Activated CD4-positive, alpha-beta memory T cell treated with anti-CD3 and anti-CD28 coated beads for 36 hours (primary cell): ENCODE measurements at regions of chr4 and their contacts with region 1.

Region 1: GRCh38 chr4:119151161-119151560 is 15.5 kb downstream of the MYOZ2 start:
- DNase-seq: no peak
- H3K4me3 Mint-ChIP-seq: no peak overlapping the region
- H3K27ac Mint-ChIP-seq: no peak overlapping the region
- H3K4me1 Mint-ChIP-seq: no peaks in the 10 kb centered on the region
- H3K27me3 Mint-ChIP-seq: peaks cover 1% of the 10 kb centered on the region

Region 2: GRCh38 chr4:119165767-119166166 is 14.6 kb after region 1 on chr4:
- CTCF ChIA-PET with region 1: interaction called, 4 read pairs
- POLR2A ChIA-PET with region 1: no interaction called
- intact Hi-C with region 1: loop called (anchors 1 kb)
- DNase-seq: no peak
- H3K4me3 Mint-ChIP-seq: no peak overlapping the region
- H3K27ac Mint-ChIP-seq: no peak overlapping the region
- H3K4me1 Mint-ChIP-seq: no peaks in the 10 kb centered on the region
- H3K27me3 Mint-ChIP-seq: peaks cover 4% of the 10 kb centered on the region

Region 3: GRCh38 chr4:119220751-119221150 is 69.6 kb after region 1 on chr4:
- CTCF ChIA-PET with region 1: no interaction called
- POLR2A ChIA-PET with region 1: no interaction called
- intact Hi-C with region 1: no loop called
- DNase-seq: no peak
- H3K4me3 Mint-ChIP-seq: no peak overlapping the region
- H3K27ac Mint-ChIP-seq: no peak overlapping the region
- H3K4me1 Mint-ChIP-seq: peaks cover 11% of the 10 kb centered on the region
- H3K27me3 Mint-ChIP-seq: no peaks in the 10 kb centered on the region